ENCODE measurements at regions of chr17 and their contacts with region 1.

Region 1: GRCh38 chr17:42586514-42587230 is 9.1 kb upstream of the PSMC3IP start:
- H3K4me3 Mint-ChIP-seq: no peak overlapping the region
- H3K27ac Mint-ChIP-seq: peak overlapping the region; percentile 43
- H3K4me1 Mint-ChIP-seq: peaks cover 26% of the 10 kb centered on the region
- H3K27me3 Mint-ChIP-seq: no peaks in the 10 kb centered on the region

Region 2: GRCh38 chr17:42200702-42201101 is 386.0 kb before region 1 on chr17:
- intact Hi-C with region 1: no loop called
- H3K4me3 Mint-ChIP-seq: no peak overlapping the region
- H3K27ac Mint-ChIP-seq: peak overlapping the region; percentile 93
- H3K4me1 Mint-ChIP-seq: peaks cover 20% of the 10 kb centered on the region
- H3K27me3 Mint-ChIP-seq: no peaks in the 10 kb centered on the region

Region 3: DNA sequence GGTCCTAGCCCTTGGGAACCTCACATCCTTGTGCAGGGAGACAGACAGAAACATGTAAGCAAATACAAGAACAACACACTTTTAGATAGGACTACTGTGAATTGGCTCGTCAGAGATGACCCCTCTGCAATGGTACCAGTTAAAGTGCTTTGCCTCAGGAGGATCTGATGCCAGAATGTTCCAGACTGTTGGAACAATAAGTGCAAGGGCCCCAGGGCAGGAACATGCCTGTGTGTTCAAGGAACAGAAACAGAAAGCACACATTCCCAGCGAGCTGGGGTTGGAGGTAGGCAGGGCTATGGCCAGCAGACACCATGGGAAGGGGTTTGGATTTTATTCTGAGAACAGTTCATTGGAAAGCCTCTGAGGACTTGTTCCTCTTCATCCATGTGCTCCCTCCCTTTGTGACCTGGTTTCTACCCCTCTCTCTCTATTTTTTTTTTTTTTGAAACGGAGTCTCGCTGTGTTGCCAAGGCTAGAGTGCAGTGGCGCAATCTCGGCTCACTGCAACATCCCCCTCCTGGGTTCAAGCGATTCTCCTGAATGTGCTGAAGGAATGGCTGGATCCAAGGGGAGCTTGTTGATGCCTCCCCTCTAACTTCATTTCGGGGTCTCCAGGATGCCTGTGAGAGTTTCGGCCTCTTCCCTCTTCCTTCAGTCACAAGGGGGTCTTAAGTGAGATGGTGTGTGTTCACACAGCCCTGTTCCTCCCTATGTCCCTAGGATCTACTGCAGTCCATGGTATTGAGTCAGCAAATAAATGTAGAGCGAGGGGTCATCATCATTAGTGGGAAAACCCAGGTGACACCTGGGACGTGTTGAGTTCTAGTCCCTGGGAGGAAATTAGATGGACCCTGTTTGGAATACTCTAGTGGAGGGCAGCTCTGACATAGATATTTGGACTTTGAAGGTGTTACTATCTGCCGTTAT is 291.9 kb before region 1 on chr17:
- intact Hi-C with region 1: no loop called
- H3K4me3 Mint-ChIP-seq: no peak overlapping the region
- H3K27ac Mint-ChIP-seq: no peak overlapping the region
- H3K4me1 Mint-ChIP-seq: peaks cover 43% of the 10 kb centered on the region
- H3K27me3 Mint-ChIP-seq: no peaks in the 10 kb centered on the region

Region 4: GRCh38 chr17:42484304-42484703 is 102.4 kb before region 1 on chr17:
- intact Hi-C with region 1: no loop called
- H3K4me3 Mint-ChIP-seq: no peak overlapping the region
- H3K27ac Mint-ChIP-seq: no peak overlapping the region
- H3K4me1 Mint-ChIP-seq: no peaks in the 10 kb centered on the region
- H3K27me3 Mint-ChIP-seq: no peaks in the 10 kb centered on the region

Region 5: GRCh38 chr17:42561908-42562844 is 24.5 kb before region 1 on chr17 and contains the start of gene COASY:
- intact Hi-C with region 1: no loop called
- H3K4me3 Mint-ChIP-seq: peak within 1 kb of the TSS; percentile 98
- H3K27ac Mint-ChIP-seq: peak within 1 kb of the TSS; percentile 97
- H3K4me1 Mint-ChIP-seq: peaks cover 54% of the 10 kb centered on the region
- H3K27me3 Mint-ChIP-seq: no peaks in the 10 kb centered on the region

Region 6: DNA sequence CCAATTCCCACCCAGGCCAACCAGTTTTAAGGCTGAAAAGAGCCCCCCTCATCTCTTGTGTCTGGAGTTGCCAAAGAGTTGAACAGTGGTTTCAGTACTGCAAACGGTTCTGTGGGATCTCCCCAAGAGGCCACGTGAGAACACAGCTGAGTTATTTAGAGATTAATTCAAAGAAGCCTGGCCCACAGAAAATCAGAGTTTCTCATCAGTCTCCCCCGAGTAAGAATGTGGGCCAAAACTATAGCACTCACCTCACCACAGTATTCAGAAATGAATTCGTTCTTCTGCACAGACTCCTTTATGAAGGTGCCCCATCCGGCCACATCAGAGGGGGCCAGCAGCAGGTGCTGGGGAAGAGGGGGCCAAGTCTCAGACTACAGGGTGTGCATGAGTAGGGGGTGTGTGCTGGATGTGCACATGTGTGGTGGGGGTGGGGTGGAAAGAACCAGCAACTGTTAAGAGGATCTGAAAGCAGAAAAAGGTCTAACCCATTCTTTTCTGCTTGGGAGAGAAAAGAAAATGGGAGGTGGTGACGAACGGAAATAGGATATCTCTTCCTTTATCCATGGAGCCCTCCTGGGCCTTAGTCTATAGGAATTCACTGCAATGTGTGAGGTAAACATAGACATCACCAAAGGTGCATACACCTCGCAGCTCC is 118.3 kb after region 1 on chr17:
- intact Hi-C with region 1: loop called (anchors 10 kb)
- H3K4me3 Mint-ChIP-seq: no peak overlapping the region
- H3K27ac Mint-ChIP-seq: no peak overlapping the region
- H3K4me1 Mint-ChIP-seq: peaks cover 11% of the 10 kb centered on the region
- H3K27me3 Mint-ChIP-seq: no peaks in the 10 kb centered on the region

Measured in dendritic cell treated with granulocyte-macrophage colony-stimulating factor and Interleukin-4, amounts not matched to agents 40 ng/mL and 50 ng/mL, for 4 days (primary cell).